Caco-2 (cell line): ENCODE measurements at regions of chr2 and their contacts with region 1.

Region 1: GRCh38 chr2:191566344-191566743 is 111.6 kb upstream of the NABP1 start:
- DNase-seq: peak; percentile 89 to 90
- H3K4me3 ChIP-seq: no peak overlapping the region
- H3K4me3 Mint-ChIP-seq: peak overlapping the region; percentile 72
- H3K27ac Mint-ChIP-seq: peak overlapping the region; percentile 92
- H3K4me1 ChIP-seq: peaks cover 59% of the 10 kb centered on the region
- H3K4me1 Mint-ChIP-seq: peaks cover 47% of the 10 kb centered on the region
- H3K27me3 ChIP-seq: no peaks in the 10 kb centered on the region
- H3K27me3 Mint-ChIP-seq: no peaks in the 10 kb centered on the region
- CTCF ChIP-seq: peak; percentile 76 to 86

Region 2: GRCh38 chr2:191625016-191625415 is 58.7 kb after region 1 on chr2:
- CTCF ChIA-PET with region 1: interaction called, 12 read pairs
- POLR2A ChIA-PET with region 1: no interaction called
- intact Hi-C with region 1: loop called (anchors 1 kb)
- DNase-seq: peak; percentile 40 to 54
- H3K4me3 ChIP-seq: no peak overlapping the region
- H3K4me3 Mint-ChIP-seq: no peak overlapping the region
- H3K27ac Mint-ChIP-seq: peak overlapping the region; percentile 89
- H3K4me1 ChIP-seq: peaks cover 76% of the 10 kb centered on the region
- H3K4me1 Mint-ChIP-seq: peaks cover 56% of the 10 kb centered on the region
- H3K27me3 ChIP-seq: no peaks in the 10 kb centered on the region
- H3K27me3 Mint-ChIP-seq: no peaks in the 10 kb centered on the region
- CTCF ChIP-seq: no peak

Region 3: GRCh38 chr2:191677646-191678436 is 111.5 kb after region 1 on chr2 and contains the start of gene NABP1:
- CTCF ChIA-PET with region 1: interaction called, 16 read pairs
- POLR2A ChIA-PET with region 1: interaction called, 33 read pairs
- intact Hi-C with region 1: loop called (anchors 1 kb)
- DNase-seq: peak; percentile 98 to 99
- H3K4me3 ChIP-seq: peak within 1 kb of the TSS; percentile 87
- H3K4me3 Mint-ChIP-seq: peak within 1 kb of the TSS; percentile 99
- H3K27ac Mint-ChIP-seq: peak within 1 kb of the TSS; percentile 99
- H3K4me1 ChIP-seq: peaks cover 25% of the 10 kb centered on the region
- H3K4me1 Mint-ChIP-seq: peaks cover 12% of the 10 kb centered on the region
- H3K27me3 ChIP-seq: no peaks in the 10 kb centered on the region; the same call in 1 of the 2 replicates
- H3K27me3 Mint-ChIP-seq: no peaks in the 10 kb centered on the region
- CTCF ChIP-seq: no peak
- total RNA-seq, gene NABP1: 89.8 and 91.4 TPM in 2 replicates

Region 4: GRCh38 chr2:191713837-191714236 is 147.5 kb after region 1 on chr2:
- CTCF ChIA-PET with region 1: interaction called, 4 read pairs
- POLR2A ChIA-PET with region 1: interaction called, 11 read pairs
- intact Hi-C with region 1: no loop called
- DNase-seq: peak in 1 of 2 experiments; percentile 25
- H3K4me3 ChIP-seq: no peak overlapping the region
- H3K4me3 Mint-ChIP-seq: no peak overlapping the region
- H3K27ac Mint-ChIP-seq: no peak overlapping the region
- H3K4me1 ChIP-seq: no peaks in the 10 kb centered on the region
- H3K4me1 Mint-ChIP-seq: no peaks in the 10 kb centered on the region
- H3K27me3 ChIP-seq: no peaks in the 10 kb centered on the region
- H3K27me3 Mint-ChIP-seq: no peaks in the 10 kb centered on the region
- CTCF ChIP-seq: no peak

Region 5: DNA sequence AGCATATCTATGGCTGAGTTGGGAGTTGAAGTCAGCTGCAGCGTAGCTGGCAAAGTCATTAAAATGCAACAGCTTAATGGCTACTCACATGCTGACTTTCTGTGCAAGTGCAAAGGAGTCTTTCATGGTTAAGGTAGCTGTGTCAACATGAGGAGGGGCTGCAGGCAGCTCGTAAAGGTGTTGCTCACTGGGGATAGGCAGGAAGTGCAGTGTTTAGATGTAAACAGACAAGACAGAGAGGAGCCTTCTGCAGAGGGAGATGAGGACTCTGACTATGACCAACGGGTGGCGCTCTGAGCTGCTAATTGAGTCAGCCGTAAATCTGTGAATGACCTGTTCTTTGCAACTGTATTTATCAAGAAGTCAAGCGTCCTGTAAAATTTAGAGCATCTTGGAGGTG is 302.8 kb after region 1 on chr2:
- CTCF ChIA-PET with region 1: no interaction called
- POLR2A ChIA-PET with region 1: no interaction called
- intact Hi-C with region 1: loop called (anchors 5 kb)
- DNase-seq: peak in 1 of 2 experiments; percentile 26
- H3K4me3 ChIP-seq: no peak overlapping the region
- H3K4me3 Mint-ChIP-seq: no peak overlapping the region
- H3K27ac Mint-ChIP-seq: no peak overlapping the region
- H3K4me1 ChIP-seq: peaks cover 21% of the 10 kb centered on the region
- H3K4me1 Mint-ChIP-seq: peaks cover 18% of the 10 kb centered on the region
- H3K27me3 ChIP-seq: no peaks in the 10 kb centered on the region
- H3K27me3 Mint-ChIP-seq: no peaks in the 10 kb centered on the region
- CTCF ChIP-seq: peak; percentile 15 to 22